ENCODE measurements at regions of chr17 and their contacts with region 1.

Region 1: GRCh38 chr17:57440522-57441485 is 184.5 kb downstream of the MSI2 start:
- DNase-seq: peak; percentile 63
- ATAC-seq: peak; percentile 79
- H3K4me3 ChIP-seq: peak overlapping the region; percentile 17; the same call in 1 of the 2 replicates
- H3K27ac ChIP-seq: peak overlapping the region; percentile 92
- H3K4me1 ChIP-seq: peaks cover 58% of the 10 kb centered on the region
- H3K27me3 ChIP-seq: no peaks in the 10 kb centered on the region
- CTCF ChIP-seq: peak; percentile 44 to 71 (median 69)
- EP300 ChIP-seq: peak; percentile 75 to 76; a peak in 2 of 4 replicates
- POLR2A ChIP-seq: no peak; the same call in 1 of the 2 replicates
- RAD21 ChIP-seq: no peak

Region 2: DNA sequence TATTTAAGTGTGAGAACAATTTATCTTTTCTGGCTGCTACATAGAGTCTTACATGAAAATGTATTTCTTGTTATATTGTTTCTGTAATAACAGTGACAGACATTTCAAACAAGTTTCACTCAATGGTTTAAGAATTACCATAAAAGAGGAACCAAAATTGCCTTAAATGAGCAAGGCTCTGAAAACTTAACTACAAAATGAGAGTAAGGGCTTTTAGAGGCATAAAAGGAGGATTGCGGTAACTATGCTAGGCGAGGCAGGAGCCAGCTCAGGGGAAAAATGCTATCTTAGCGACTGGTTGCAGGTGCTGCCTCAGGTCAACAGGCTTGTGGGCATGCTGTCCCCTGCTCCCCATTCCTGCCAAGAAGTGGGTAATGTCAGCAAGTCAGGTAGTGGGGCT is 266.2 kb before region 1 on chr17:
- CTCF ChIA-PET with region 1: no interaction called
- POLR2A ChIA-PET with region 1: no interaction called
- RAD21 ChIA-PET with region 1: no interaction called
- SMC1A ChIA-PET with region 1: no interaction called
- in situ Hi-C with region 1: no loop called
- intact Hi-C with region 1: loop called (anchors 10 kb)
- DNase-seq: peak; percentile 55
- ATAC-seq: peak; percentile 95
- H3K4me3 ChIP-seq: 0 out of 2 replicates have a peak overlapping the region, but pooled peaks have one; percentile 1
- H3K27ac ChIP-seq: peak overlapping the region; percentile 13; the same call in 1 of the 2 replicates
- H3K4me1 ChIP-seq: peaks cover 13% of the 10 kb centered on the region
- H3K27me3 ChIP-seq: no peaks in the 10 kb centered on the region
- CTCF ChIP-seq: no peak
- EP300 ChIP-seq: peak in 1 of 2 experiments; percentile 74; a peak in 1 of 4 replicates
- POLR2A ChIP-seq: no peak
- RAD21 ChIP-seq: no peak

Region 3: DNA sequence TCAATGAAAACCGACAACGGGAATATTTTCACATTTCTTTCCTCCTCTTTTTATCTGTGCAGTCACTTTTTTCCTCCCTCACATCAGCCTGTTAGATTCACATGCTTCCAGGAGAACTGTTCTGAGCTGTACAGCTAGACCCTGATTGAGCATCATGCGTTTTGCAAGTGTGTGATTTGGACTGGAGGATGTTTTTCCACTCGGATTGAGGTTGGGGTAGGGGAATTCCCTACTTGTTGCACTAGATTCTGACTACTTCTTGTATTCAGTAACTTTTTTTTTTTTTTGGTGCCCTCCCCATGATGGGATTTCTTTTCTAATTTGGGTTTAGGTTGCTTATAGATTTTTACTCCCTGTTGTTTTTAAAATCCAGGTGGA is 179.7 kb before region 1 on chr17:
- CTCF ChIA-PET with region 1: interaction called, 44 read pairs
- POLR2A ChIA-PET with region 1: interaction called, 5 read pairs
- RAD21 ChIA-PET with region 1: interaction called, 12 read pairs
- SMC1A ChIA-PET with region 1: interaction called, 7 read pairs
- in situ Hi-C with region 1: no loop called
- intact Hi-C with region 1: loop called (anchors 5 kb)
- DNase-seq: no peak
- ATAC-seq: no peak
- H3K4me3 ChIP-seq: peak overlapping the region; percentile 95; the same call in 1 of the 2 replicates
- H3K27ac ChIP-seq: peak overlapping the region; percentile 20
- H3K4me1 ChIP-seq: peaks cover 4% of the 10 kb centered on the region; the same call in 1 of the 2 replicates
- H3K27me3 ChIP-seq: no peaks in the 10 kb centered on the region
- CTCF ChIP-seq: no peak
- EP300 ChIP-seq: no peak
- POLR2A ChIP-seq: no peak
- RAD21 ChIP-seq: no peak

Region 4: DNA sequence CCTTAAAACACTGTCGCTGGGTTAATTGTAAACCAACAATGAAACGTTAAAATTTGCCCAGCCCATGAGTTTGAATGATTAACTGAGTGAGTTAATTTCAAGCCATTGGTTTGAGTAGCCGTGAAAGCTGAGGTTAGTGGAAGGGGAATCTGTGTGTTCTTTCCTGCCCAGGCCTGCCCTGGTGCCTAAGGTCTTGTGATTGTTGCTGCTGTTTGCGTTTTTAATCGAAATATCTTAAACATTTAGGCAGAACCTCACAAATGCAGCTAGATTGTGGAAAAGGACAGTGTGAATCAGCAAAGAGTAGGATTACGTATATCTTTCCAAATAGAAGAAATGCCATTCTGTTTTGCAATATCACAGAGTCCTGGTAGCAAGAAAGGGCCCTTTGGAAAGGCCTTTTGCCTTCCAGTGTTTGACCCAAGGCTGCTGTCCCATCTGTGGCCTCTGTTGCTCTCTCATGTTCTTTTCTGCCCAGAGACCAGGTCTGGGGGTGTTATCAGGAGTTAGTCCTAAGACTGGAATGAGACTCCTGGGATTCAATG is 70.7 kb before region 1 on chr17:
- CTCF ChIA-PET with region 1: interaction called, 20 read pairs
- POLR2A ChIA-PET with region 1: interaction called, 8 read pairs
- RAD21 ChIA-PET with region 1: interaction called, 20 read pairs
- SMC1A ChIA-PET with region 1: interaction called, 26 read pairs
- in situ Hi-C with region 1: no loop called
- intact Hi-C with region 1: no loop called
- DNase-seq: no peak
- ATAC-seq: peak; percentile 84
- H3K4me3 ChIP-seq: no peak overlapping the region
- H3K27ac ChIP-seq: peak overlapping the region; percentile 75
- H3K4me1 ChIP-seq: peaks cover 51% of the 10 kb centered on the region
- H3K27me3 ChIP-seq: no peaks in the 10 kb centered on the region
- CTCF ChIP-seq: no peak
- EP300 ChIP-seq: peak; percentile 47 to 88; a peak in 3 of 4 replicates
- POLR2A ChIP-seq: no peak
- RAD21 ChIP-seq: no peak

Region 5: DNA sequence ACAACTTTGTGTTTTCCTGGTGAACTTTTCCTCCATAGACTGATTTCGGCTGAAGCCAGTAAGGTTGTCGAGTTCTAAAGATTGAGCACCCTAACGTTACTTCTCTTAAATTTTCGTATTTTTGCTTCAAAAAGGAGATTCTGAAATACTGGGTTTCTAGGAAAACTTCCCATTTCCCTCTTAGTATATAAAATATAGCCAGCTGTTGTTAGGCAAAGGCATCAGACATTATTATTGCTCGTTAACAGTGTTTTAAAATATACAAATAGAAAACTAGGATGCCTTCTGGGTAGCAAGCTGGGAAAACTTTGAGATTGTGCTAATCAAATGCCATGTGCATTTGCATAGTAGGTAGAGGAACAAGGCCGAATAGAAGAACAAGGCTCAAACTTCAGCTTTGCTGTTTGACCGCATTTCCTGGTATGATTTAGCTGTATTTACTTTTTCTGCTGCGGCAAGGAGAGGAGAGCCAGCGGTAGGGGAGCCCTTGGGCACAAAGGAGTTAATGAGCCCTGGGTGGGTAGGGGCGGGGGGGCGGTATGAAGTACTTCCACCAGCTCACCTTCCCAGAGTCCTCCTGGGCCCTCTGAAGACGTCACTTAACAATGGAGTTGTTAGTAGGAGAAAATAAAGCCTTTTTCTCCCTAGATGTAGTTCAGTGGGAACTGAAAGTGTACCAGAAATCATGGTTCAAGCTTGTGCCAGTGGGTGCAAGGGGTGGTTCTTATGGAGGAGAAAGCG is 32.6 kb before region 1 on chr17:
- CTCF ChIA-PET with region 1: interaction called, 28 read pairs
- POLR2A ChIA-PET with region 1: interaction called, 9 read pairs
- RAD21 ChIA-PET with region 1: interaction called, 13 read pairs
- SMC1A ChIA-PET with region 1: interaction called, 21 read pairs
- in situ Hi-C with region 1: no loop called
- intact Hi-C with region 1: no loop called
- DNase-seq: peak; percentile 46
- ATAC-seq: peak; percentile 92
- H3K4me3 ChIP-seq: no peak overlapping the region
- H3K27ac ChIP-seq: peak overlapping the region; percentile 54
- H3K4me1 ChIP-seq: peaks cover 9% of the 10 kb centered on the region
- H3K27me3 ChIP-seq: no peaks in the 10 kb centered on the region
- CTCF ChIP-seq: peak in 1 of 3 experiments; percentile 10; a peak in 1 of 6 replicates
- EP300 ChIP-seq: no peak
- POLR2A ChIP-seq: no peak
- RAD21 ChIP-seq: no peak

Region 6: DNA sequence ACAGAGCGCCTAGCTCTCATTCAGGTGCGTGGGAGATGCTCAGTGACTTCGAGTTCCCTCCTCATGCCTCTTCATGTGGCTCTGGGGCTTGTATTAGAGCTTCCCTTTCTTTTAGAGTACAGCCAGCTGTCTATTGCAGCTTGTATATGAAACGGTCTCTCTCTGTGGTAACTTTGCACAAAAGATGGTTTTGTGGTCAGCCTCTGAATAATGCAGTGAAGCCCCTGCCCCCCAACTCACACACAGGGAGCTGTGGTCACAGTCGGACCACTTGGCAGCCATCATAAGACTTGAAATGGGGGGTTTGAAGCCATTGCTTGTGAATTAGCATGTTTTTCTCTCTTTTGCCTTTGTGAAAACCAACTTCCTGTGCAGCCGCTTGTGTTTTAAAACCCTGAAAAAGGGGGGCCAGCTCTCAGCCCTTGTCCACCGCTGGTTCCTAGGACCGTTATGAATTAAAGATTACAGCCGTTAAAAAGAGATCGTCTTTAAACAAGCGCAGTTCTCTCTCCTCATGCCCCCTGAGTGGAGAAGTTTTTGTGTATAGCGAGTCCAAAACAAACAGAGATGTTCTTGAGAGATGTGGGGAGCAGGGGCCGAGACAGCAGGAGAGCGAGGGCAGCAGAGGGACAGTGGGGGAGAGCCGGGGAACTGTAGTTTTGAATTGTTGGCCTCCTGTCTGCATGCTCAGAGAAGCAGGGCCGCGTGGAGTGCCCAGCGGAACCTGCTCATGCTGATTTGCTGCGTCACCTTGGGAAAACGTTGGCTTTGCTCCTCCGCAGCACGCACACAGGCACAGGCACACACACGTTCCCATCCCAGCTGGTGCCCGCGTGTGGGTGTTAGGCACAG is 14.5 kb after region 1 on chr17:
- CTCF ChIA-PET with region 1: interaction called, 24 read pairs
- POLR2A ChIA-PET with region 1: interaction called, 11 read pairs
- RAD21 ChIA-PET with region 1: interaction called, 41 read pairs
- SMC1A ChIA-PET with region 1: interaction called, 51 read pairs
- in situ Hi-C with region 1: no loop called
- intact Hi-C with region 1: no loop called
- DNase-seq: peak; percentile 94
- ATAC-seq: peak; percentile 91
- H3K4me3 ChIP-seq: no peak overlapping the region
- H3K27ac ChIP-seq: peak overlapping the region; percentile 98
- H3K4me1 ChIP-seq: peaks cover 73% of the 10 kb centered on the region
- H3K27me3 ChIP-seq: no peaks in the 10 kb centered on the region
- CTCF ChIP-seq: no peak
- EP300 ChIP-seq: peak; percentile 95 to 99
- POLR2A ChIP-seq: peak; percentile 59
- RAD21 ChIP-seq: peak; percentile 35

Region 7: DNA sequence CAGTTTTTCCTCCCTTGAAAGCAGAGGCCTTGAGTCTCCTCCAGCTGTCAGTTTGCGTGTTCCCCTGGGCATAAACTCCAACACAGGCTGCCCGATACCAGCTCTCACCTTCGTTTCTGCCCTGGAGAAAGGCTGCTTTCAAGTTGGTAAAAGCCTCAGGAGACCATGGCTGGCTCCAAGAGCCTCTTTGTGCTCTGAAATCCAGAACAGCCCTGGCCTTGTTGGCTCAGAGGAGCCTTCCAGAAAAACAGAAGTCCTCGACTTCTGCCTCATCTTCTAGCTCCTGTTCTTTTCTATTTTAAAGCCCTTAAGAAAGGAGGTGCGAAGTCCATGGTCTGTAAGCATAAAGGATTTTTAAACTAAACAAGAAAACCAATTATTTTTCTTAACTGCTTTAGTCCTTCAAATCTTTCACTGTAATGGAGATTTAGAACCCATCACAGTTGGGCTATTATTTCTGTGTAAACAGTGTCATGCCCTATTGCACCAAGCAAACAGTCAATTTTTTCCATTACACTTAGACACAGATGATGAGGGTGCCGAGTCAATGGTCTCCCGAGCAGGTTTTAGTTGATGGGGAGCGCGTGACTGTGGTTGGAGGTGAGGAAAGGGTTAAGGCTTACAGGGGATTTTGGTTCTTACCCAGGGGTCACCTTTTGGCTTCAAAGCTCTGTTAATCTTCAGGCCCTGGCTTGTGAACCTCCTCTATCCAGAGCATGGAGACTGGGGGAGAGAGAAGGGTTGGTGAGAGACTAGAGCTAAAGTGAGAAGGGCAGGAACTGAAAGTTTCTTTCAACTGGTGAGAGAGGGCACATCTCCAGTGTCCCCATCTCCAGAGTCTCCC is 28.4 kb after region 1 on chr17:
- CTCF ChIA-PET with region 1: interaction called, 16 read pairs
- POLR2A ChIA-PET with region 1: interaction called, 3 read pairs
- RAD21 ChIA-PET with region 1: interaction called, 15 read pairs
- SMC1A ChIA-PET with region 1: interaction called, 14 read pairs
- in situ Hi-C with region 1: no loop called
- intact Hi-C with region 1: no loop called
- DNase-seq: peak; percentile 68
- ATAC-seq: peak; percentile 74
- H3K4me3 ChIP-seq: no peak overlapping the region
- H3K27ac ChIP-seq: peak overlapping the region; percentile 93
- H3K4me1 ChIP-seq: peaks cover 56% of the 10 kb centered on the region
- H3K27me3 ChIP-seq: no peaks in the 10 kb centered on the region
- CTCF ChIP-seq: no peak
- EP300 ChIP-seq: peak; percentile 57 to 84; a peak in 3 of 4 replicates
- POLR2A ChIP-seq: no peak
- RAD21 ChIP-seq: no peak

Measured in GM12878 (cell line).